AG04449 (cell line): ENCODE measurements at regions of chr12 and their contacts with region 1.

Region 1: DNA sequence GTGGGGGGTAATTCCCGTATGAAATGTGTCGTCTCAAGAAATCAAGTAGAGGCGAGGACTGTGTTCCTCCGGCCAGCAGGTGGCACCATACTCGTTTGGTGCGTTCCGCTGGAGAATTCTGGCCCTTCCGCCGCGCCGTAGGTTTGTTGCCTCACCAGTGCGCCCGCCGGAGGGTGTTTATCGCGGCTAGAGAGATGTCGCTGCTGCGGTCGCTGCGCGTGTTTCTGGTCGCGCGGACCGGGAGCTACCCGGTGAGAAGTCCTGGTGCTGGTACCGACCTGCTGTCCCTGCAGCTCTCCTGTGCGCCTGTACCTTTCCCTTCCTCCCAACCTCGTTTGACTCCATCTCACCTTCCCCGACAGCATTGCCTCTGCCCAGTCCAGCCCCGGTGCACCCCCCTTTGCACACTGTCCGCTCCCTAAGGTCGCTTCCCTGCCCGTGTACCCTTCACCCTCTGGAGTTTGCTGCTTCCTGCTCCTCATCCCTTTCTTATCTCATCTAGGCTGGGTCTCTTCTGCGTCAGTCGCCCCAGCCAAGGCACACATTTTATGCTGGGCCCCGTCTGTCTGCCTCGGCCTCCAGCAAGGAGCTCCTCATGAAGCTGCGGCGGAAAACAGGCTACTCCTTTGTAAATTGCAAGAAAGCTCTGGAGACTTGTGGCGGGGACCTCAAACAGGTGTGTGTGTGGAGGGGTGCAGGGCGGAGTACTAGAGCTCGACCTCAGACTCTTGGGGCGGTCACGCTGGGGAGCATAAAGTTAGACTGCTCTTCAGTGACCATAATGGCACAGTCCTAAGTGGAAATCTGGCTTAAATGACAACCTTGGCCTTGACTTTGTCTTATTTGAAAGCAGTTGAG is at the start of gene TSFM:
- DNase-seq: peak; percentile 69
- H3K4me3 ChIP-seq: peak within 1 kb of the TSS; percentile 94
- CTCF ChIP-seq: peak; percentile 95

Region 2: GRCh38 chr12:57771708-57772428 is 11.0 kb before region 1 on chr12 and contains the start of gene METTL1:
- CTCF ChIA-PET with region 1: interaction called, 31 read pairs
- POLR2A ChIA-PET with region 1: interaction called, 5 read pairs
- DNase-seq: peak; percentile 73
- H3K4me3 ChIP-seq: peak within 1 kb of the TSS; percentile 99
- CTCF ChIP-seq: no peak

Region 3: DNA sequence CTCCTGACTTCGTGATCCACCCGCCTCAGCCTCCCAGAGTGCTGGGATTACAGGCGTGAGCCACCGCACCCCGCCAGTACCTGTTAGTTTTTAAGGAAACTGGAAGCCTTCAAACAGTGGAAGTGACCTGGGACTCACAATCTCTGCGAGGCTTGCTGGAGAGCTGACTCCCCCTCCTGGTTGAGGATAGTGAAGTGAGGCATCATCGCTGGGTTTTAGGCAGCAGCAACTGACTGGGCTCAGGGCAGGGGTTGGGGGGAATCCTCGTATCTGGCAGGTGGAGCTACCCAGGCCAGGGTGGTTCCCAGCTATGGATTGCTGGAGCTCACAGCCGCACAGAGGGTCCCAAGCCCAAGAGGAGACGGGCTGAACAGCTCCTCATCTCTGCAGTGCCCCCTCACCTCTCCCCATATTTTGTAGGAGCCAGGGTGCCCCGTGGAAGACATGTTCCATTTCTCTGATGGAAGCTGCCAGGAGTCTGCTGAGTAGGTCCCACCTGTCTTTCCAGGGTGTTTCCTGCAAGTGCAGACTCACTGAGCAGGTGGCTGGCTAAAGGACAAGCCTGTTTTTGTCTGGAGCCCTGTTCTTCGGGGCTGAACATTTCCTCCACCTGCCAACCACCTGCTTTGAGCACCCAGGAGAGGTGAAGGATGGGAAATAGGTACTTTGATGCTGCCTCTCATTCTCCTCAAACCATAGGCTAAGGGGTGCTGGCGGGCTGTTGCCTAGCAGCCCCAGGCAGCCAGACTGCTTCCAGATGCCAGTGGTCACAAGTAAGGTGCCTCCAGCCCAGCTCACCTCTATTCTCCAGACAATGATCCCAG is 32.6 kb after region 1 on chr12:
- CTCF ChIA-PET with region 1: interaction called, 10 read pairs
- POLR2A ChIA-PET with region 1: no interaction called
- DNase-seq: no peak
- H3K4me3 ChIP-seq: no peak overlapping the region
- CTCF ChIP-seq: no peak